ENCODE measurements at regions of chr11 and their contacts with region 1.

Region 1: GRCh38 chr11:64990222-64990923 is 6.4 kb downstream of the BATF2 start:
- DNase-seq: peak; percentile 74
- H3K4me3 ChIP-seq: peak overlapping the region; percentile 51
- H3K27ac ChIP-seq: peak overlapping the region; percentile 79
- H3K4me1 ChIP-seq: peaks cover 46% of the 10 kb centered on the region
- CTCF ChIP-seq: no peak

Region 2: GRCh38 chr11:64916775-64917662 is 73.4 kb before region 1 on chr11 and contains the start of gene ATG2A:
- CTCF ChIA-PET with region 1: no interaction called
- POLR2A ChIA-PET with region 1: interaction called, 4 read pairs
- intact Hi-C with region 1: loop called (anchors 2 kb)
- DNase-seq: peak; percentile 100
- H3K4me3 ChIP-seq: peak within 1 kb of the TSS; percentile 87
- H3K27ac ChIP-seq: peak within 1 kb of the TSS; percentile 63
- H3K4me1 ChIP-seq: peaks cover 32% of the 10 kb centered on the region
- CTCF ChIP-seq: no peak
- total RNA-seq, gene ATG2A: 18.1 and 29.0 TPM in 2 replicates

Region 3: GRCh38 chr11:64971421-64972233 is 18.7 kb before region 1 on chr11 and contains the start of gene MAJIN:
- CTCF ChIA-PET with region 1: interaction called, 3 read pairs
- POLR2A ChIA-PET with region 1: interaction called, 12 read pairs
- intact Hi-C with region 1: no loop called
- DNase-seq: no peak
- H3K4me3 ChIP-seq: no peak within 1 kb of the TSS
- H3K27ac ChIP-seq: peak within 1 kb of the TSS; percentile 93
- H3K4me1 ChIP-seq: peaks cover 59% of the 10 kb centered on the region
- CTCF ChIP-seq: no peak
- total RNA-seq, gene MAJIN: not detected in 2 replicates

Measured in OCI-LY7 (cell line).